ENCODE measurements at regions of chr6 and their contacts with region 1.

Region 1: GRCh38 chr6:144820270-144820669 is 535.1 kb downstream of the UTRN start:
- DNase-seq: no peak
- H3K4me3 ChIP-seq: no peak overlapping the region
- CTCF ChIP-seq: no peak
- POLR2A ChIP-seq: no peak

Region 2: GRCh38 chr6:144705322-144705721 is 114.9 kb before region 1 on chr6:
- intact Hi-C with region 1: loop called (anchors 5 kb)
- DNase-seq: no peak
- H3K4me3 ChIP-seq: no peak overlapping the region
- CTCF ChIP-seq: no peak
- POLR2A ChIP-seq: no peak